ENCODE measurements at regions of chr16 and their contacts with region 1.

Region 1: GRCh38 chr16:29815793-29816693 is at the start of gene PAGR1:
- DNase-seq: peak; percentile 97
- ATAC-seq: peak; percentile 74
- H3K4me3 Mint-ChIP-seq: peak within 1 kb of the TSS; percentile 99
- H3K27ac Mint-ChIP-seq: peak within 1 kb of the TSS; percentile 99
- H3K4me1 Mint-ChIP-seq: peaks cover 71% of the 10 kb centered on the region
- H3K27me3 Mint-ChIP-seq: no peaks in the 10 kb centered on the region
- CTCF ChIP-seq: peak; percentile 89
- total RNA-seq, gene PAGR1: 18.6 and 20.3 TPM in 2 replicates

Region 2: DNA sequence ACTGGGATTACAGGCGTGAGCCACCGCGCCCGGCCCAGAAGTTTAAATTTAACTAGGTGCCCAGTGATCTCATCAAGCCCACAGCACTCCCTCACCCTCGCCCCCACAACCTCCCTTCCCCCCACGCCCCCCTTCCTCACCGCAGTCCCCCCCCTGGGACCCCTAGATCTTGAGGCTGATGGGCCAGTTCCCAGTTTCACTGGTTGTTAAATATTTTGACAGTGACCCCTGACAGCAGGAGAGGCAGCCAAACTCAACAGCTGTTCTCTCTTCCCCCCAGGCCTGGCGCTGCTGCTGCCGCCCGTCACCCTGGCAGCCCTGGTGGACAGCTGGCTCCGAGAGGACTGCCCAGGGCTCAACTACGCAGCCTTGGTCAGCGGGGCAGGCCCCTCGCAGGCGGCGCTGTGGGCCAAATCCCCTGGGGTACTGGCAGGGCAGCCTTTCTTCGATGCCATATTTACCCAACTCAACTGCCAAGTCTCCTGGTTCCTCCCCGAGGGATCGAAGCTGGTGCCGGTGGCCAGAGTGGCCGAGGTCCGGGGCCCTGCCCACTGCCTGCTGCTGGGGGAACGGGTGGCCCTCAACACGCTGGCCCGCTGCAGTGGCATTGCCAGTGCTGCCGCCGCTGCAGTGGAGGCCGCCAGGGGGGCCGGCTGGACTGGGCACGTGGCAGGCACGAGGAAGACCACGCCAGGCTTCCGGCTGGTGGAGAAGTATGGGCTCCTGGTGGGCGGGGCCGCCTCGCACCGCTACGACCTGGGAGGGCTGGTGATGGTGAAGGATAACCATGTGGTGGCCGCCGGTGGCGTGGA is 121.5 kb before region 1 on chr16:
- CTCF ChIA-PET with region 1: interaction called, 4 read pairs
- POLR2A ChIA-PET with region 1: interaction called, 5 read pairs
- intact Hi-C with region 1: loop called (anchors 2 kb)
- DNase-seq: no peak
- ATAC-seq: no peak
- H3K4me3 Mint-ChIP-seq: no peak overlapping the region
- H3K27ac Mint-ChIP-seq: no peak overlapping the region
- H3K4me1 Mint-ChIP-seq: peaks cover 13% of the 10 kb centered on the region
- H3K27me3 Mint-ChIP-seq: no peaks in the 10 kb centered on the region
- CTCF ChIP-seq: no peak

Region 3: GRCh38 chr16:29790183-29790952 is 25.7 kb before region 1 on chr16 and contains the start of gene KIF22:
- CTCF ChIA-PET with region 1: interaction called, 4 read pairs
- POLR2A ChIA-PET with region 1: interaction called, 26 read pairs
- intact Hi-C with region 1: loop called (anchors 1 kb)
- DNase-seq: peak; percentile 99
- ATAC-seq: peak; percentile 97
- H3K4me3 Mint-ChIP-seq: peak within 1 kb of the TSS; percentile 98
- H3K27ac Mint-ChIP-seq: peak within 1 kb of the TSS; percentile 93
- H3K4me1 Mint-ChIP-seq: peaks cover 34% of the 10 kb centered on the region
- H3K27me3 Mint-ChIP-seq: no peaks in the 10 kb centered on the region
- CTCF ChIP-seq: no peak
- total RNA-seq, gene KIF22: 33.1 and 40.1 TPM in 2 replicates

Region 4: GRCh38 chr16:29848420-29849297 is 32.6 kb after region 1 on chr16:
- CTCF ChIA-PET with region 1: interaction called, 24 read pairs
- POLR2A ChIA-PET with region 1: interaction called, 12 read pairs
- intact Hi-C with region 1: loop called (anchors 1 kb)
- DNase-seq: peak; percentile 60
- ATAC-seq: peak; percentile 82
- H3K4me3 Mint-ChIP-seq: no peak overlapping the region
- H3K27ac Mint-ChIP-seq: no peak overlapping the region
- H3K4me1 Mint-ChIP-seq: no peaks in the 10 kb centered on the region
- H3K27me3 Mint-ChIP-seq: no peaks in the 10 kb centered on the region
- CTCF ChIP-seq: peak; percentile 52

Region 5: GRCh38 chr16:29943846-29944669 is 128.0 kb after region 1 on chr16:
- CTCF ChIA-PET with region 1: no interaction called
- POLR2A ChIA-PET with region 1: no interaction called
- intact Hi-C with region 1: no loop called
- DNase-seq: no peak
- ATAC-seq: no peak
- H3K4me3 Mint-ChIP-seq: no peak overlapping the region
- H3K27ac Mint-ChIP-seq: no peak overlapping the region
- H3K4me1 Mint-ChIP-seq: no peaks in the 10 kb centered on the region
- H3K27me3 Mint-ChIP-seq: peaks cover 16% of the 10 kb centered on the region
- CTCF ChIP-seq: no peak

Region 6: GRCh38 chr16:29983420-29984136 is 167.5 kb after region 1 on chr16:
- CTCF ChIA-PET with region 1: no interaction called
- POLR2A ChIA-PET with region 1: interaction called, 12 read pairs
- intact Hi-C with region 1: no loop called
- DNase-seq: no peak
- ATAC-seq: no peak
- H3K4me3 Mint-ChIP-seq: no peak overlapping the region
- H3K27ac Mint-ChIP-seq: no peak overlapping the region
- H3K4me1 Mint-ChIP-seq: no peaks in the 10 kb centered on the region
- H3K27me3 Mint-ChIP-seq: no peaks in the 10 kb centered on the region
- CTCF ChIP-seq: no peak

Region 7: GRCh38 chr16:30378236-30379204 is 562.5 kb after region 1 on chr16:
- CTCF ChIA-PET with region 1: no interaction called
- POLR2A ChIA-PET with region 1: interaction called, 14 read pairs
- intact Hi-C with region 1: no loop called
- DNase-seq: peak; percentile 99
- ATAC-seq: peak; percentile 88
- H3K4me3 Mint-ChIP-seq: peak overlapping the region; percentile 92
- H3K27ac Mint-ChIP-seq: peak overlapping the region; percentile 100
- H3K4me1 Mint-ChIP-seq: peaks cover 62% of the 10 kb centered on the region
- H3K27me3 Mint-ChIP-seq: no peaks in the 10 kb centered on the region
- CTCF ChIP-seq: no peak